GM10248 (cell line): ENCODE measurements at regions of chr9 and their contacts with region 1.

Region 1: DNA sequence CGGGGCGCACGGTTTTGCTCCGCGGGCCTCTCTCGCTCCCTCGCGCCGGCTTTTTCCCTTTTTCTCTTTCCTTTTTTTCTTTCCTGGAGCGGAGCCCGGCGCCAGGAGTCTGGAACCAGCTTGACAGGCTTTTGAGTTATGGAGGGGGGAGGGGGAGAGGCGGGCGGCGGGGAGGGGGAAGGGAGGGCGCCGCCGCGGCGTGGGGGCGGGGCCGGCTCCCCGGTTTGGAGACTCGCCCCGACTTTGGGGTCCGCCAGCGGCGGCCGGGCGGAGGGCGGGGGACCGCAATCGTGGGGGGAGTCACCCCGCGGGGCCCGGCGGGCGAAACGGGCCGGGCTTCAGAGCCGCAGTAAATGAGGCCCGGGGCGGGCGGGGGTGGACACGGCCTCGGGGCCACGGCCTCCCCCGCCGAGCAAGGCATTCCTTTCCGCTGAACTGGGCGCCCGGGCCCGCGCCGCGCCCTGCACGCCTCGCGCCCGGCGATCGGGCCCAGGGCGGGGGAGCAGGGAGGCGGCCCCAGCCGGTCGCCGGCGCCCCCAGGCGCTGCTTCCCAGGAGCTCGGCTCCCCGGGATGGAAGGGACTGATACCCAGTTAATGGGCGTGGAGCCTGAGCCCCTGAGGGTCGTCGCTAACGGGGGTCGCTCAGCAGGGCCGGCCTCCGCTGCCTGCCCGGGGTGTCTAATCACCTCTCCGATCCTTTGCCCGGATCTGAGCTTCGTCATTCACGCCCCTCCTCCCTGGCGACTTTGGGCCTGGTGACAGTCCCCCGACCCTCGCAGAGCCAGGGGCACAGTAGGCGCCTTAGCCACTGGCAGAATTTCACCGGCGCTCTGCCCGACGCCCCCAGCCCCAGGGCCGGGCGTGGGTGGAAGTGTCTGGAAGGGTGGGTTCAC is 138.1 kb downstream of the C9orf50 start:
- DNase-seq: no peak
- CTCF ChIP-seq: no peak

Region 2: DNA sequence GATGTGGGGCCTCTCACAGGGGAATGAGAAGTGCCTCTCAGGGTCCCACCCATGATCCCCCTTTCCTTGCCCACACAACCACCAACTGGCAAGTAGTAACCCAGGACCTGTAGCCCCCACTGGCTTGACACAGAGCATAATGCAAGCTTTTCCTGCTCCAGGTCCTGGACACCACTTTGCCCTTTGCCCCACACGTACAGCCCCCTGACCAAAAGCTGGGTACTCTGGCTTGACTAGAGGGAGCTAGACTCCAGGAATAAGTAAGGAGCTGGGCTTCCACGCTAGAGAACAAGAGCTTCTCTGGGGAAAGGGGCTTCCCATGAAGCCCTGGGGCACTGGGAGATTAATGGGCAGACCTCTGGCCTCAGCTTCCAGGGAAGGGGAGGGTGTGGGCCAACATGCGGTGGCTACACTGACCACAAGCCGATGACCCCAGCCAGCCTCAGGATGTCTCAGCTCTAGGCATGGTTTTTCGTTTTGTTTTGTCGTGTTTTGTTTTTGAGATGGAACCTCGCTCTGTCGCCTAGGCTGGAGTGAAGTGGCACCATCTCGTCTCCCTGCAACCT is 28.6 kb after region 1 on chr9:
- CTCF ChIA-PET with region 1: no interaction called
- POLR2A ChIA-PET with region 1: interaction called, 10 read pairs
- DNase-seq: no peak
- CTCF ChIP-seq: no peak